Adrenal gland (tissue), 19 donors: ENCODE measurements at regions of chr12 and their contacts with region 1.

Region 1: DNA sequence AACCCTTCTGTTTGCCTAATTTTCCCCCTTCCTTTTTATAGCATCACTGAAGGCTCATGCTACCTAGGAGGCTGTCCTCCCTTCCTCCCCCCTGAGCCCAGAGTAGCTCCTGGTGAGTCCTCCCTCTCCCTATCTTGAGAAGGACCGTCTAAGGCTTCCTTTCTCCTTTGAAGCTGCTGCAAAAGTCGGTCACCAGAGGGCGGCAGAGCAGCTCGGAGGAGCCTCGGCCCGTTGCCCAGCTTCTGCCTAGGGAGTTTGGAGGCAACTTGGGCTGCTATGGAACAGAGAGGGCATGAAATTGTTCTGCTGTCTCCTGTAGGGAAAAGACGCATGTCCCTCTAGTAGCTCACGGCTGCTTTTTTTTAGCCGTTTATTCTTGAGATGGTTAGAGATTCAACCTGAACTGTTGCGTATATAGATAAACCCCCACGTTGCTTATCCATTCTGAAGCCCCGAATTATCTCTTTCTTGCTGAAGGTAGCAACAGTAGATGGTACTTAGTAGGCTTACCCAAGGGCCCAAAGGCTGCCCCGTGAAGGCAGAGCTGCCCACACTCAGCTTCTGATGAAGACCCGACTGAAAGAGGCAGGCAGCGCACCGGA is 5.7 kb downstream of the WNT5B start:
- DNase-seq: peak; percentile 75 to 90 (median 85)
- H3K4me3 ChIP-seq: no peak overlapping the region
- H3K27ac ChIP-seq: no peak overlapping the region
- H3K4me1 ChIP-seq: peaks cover 0 to 8% of the 10 kb centered on the region in 2 donors
- H3K27me3 ChIP-seq: no peaks in the 10 kb centered on the region
- CTCF ChIP-seq: peak; percentile 67 to 81 (median 74)
- POLR2A ChIP-seq: no peak

Region 2: DNA sequence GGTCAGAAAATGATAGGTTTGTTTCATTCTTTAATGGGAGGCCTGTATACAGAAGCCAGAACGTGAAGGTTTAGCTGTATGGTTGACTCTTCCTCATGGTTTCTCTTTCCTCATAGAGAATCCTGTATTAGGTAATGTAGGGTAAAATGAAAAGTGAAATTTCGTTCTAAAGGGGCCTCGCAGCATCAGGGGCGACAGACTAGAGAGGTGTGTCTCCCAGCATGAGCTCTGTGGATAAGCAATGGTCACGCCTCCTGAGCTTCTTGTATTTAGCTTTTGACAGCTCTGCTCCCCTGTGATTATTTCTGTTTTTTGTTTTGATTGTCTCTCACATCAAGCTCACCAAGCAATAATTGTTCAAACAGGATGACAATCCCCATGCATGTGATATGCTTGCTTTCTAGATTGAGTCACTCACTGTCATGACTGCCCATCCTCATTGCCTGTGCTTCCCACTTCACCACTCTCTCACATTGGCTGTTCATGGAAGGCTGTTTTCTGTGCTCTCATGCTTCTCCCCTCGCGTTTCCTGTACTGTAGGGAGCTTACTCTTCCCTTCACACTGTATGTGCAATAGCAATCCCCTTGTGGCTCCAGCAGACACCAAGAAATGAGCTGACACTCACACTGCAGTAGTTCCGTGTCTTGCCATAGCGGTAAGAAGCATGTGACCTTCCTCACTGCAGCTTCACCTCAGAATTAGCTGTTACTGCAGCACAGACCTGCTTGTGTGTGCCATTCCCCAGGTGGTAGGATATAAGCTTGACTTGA is 729.2 kb before region 1 on chr12:
- intact Hi-C with region 1: no loop called
- DNase-seq: no peak
- H3K4me3 ChIP-seq: no peak overlapping the region
- H3K27ac ChIP-seq: peak overlapping the region in 1 of 5 donors; percentile 19
- H3K4me1 ChIP-seq: no peaks in the 10 kb centered on the region
- H3K27me3 ChIP-seq: no peaks in the 10 kb centered on the region
- CTCF ChIP-seq: no peak
- POLR2A ChIP-seq: no peak

Region 3: GRCh38 chr12:2129076-2129475 is 494.4 kb after region 1 on chr12:
- intact Hi-C with region 1: no loop called
- DNase-seq: peak in 1 of 7 donors; percentile 64
- H3K4me3 ChIP-seq: no peak overlapping the region
- H3K27ac ChIP-seq: no peak overlapping the region
- H3K4me1 ChIP-seq: no peaks in the 10 kb centered on the region
- H3K27me3 ChIP-seq: no peaks in the 10 kb centered on the region
- CTCF ChIP-seq: no peak
- POLR2A ChIP-seq: no peak

Region 4: GRCh38 chr12:2583091-2583497 is 948.4 kb after region 1 on chr12:
- intact Hi-C with region 1: loop called in 1 of 2 experiments (anchors 10 kb)
- DNase-seq: peak; percentile 34 to 78 (median 68)
- H3K4me3 ChIP-seq: no peak overlapping the region
- H3K27ac ChIP-seq: no peak overlapping the region
- H3K4me1 ChIP-seq: peaks cover 0 to 8% of the 10 kb centered on the region in 2 donors
- H3K27me3 ChIP-seq: no peaks in the 10 kb centered on the region
- CTCF ChIP-seq: peak; percentile 38 to 95 (median 75)
- POLR2A ChIP-seq: no peak